CD4-positive, alpha-beta T cell (primary cell): ENCODE measurements at regions of chr1 and their contacts with region 1.

Region 1: DNA sequence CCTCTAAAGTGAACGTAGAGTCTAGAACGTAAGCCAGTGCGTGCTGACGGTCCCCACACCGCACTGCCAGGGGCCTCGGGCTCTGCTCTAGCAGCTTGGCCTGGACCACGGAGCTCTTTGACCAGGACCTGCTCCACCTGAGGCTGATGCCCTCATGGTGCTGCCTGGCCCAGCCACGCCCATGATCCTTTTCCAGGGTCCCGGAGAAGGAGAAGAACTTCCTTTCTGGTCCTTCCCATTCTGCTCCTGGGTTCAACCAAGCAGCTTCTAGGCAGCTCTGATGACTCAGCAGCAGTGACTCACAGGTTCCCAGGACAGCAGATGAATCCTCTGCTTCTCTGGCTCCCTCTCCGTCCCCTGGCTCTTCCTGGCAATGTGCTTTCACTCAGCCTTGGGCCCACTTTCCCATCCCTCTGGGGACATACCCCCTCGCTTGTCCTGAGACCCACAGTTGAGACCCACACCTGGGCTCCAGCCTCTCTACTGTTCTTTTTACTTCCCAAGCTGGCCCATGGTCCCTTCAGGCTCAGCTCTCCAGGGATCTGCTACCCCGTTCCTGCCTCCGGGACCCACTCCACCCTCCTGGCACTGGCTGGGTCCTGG is 246.3 kb upstream of the RAB4A start:
- DNase-seq: peak in 2 of 14 experiments; percentile 57 to 67
- ATAC-seq: no peak
- H3K4me3 ChIP-seq: no peak overlapping the region
- H3K4me3 Mint-ChIP-seq: no peak overlapping the region
- H3K27ac ChIP-seq: no peak overlapping the region
- H3K27ac Mint-ChIP-seq: no peak overlapping the region
- H3K4me1 ChIP-seq: peaks cover 26% of the 10 kb centered on the region
- H3K4me1 Mint-ChIP-seq: peaks cover 18% of the 10 kb centered on the region
- H3K27me3 ChIP-seq: no peaks in the 10 kb centered on the region
- H3K27me3 Mint-ChIP-seq: no peaks in the 10 kb centered on the region
- CTCF ChIP-seq: no peak

Region 2: GRCh38 chr1:229070168-229070567 is 45.5 kb after region 1 on chr1:
- CTCF ChIA-PET with region 1: no interaction called
- POLR2A ChIA-PET with region 1: no interaction called
- intact Hi-C with region 1: loop called in 1 of 2 experiments (anchors 5 kb)
- DNase-seq: peak in 2 of 14 experiments; percentile 48 to 50
- ATAC-seq: no peak
- H3K4me3 ChIP-seq: no peak overlapping the region
- H3K4me3 Mint-ChIP-seq: no peak overlapping the region
- H3K27ac ChIP-seq: no peak overlapping the region
- H3K27ac Mint-ChIP-seq: no peak overlapping the region
- H3K4me1 ChIP-seq: peaks cover 27% of the 10 kb centered on the region
- H3K4me1 Mint-ChIP-seq: peaks cover 28% of the 10 kb centered on the region
- H3K27me3 ChIP-seq: no peaks in the 10 kb centered on the region
- H3K27me3 Mint-ChIP-seq: no peaks in the 10 kb centered on the region
- CTCF ChIP-seq: no peak

Region 3: DNA sequence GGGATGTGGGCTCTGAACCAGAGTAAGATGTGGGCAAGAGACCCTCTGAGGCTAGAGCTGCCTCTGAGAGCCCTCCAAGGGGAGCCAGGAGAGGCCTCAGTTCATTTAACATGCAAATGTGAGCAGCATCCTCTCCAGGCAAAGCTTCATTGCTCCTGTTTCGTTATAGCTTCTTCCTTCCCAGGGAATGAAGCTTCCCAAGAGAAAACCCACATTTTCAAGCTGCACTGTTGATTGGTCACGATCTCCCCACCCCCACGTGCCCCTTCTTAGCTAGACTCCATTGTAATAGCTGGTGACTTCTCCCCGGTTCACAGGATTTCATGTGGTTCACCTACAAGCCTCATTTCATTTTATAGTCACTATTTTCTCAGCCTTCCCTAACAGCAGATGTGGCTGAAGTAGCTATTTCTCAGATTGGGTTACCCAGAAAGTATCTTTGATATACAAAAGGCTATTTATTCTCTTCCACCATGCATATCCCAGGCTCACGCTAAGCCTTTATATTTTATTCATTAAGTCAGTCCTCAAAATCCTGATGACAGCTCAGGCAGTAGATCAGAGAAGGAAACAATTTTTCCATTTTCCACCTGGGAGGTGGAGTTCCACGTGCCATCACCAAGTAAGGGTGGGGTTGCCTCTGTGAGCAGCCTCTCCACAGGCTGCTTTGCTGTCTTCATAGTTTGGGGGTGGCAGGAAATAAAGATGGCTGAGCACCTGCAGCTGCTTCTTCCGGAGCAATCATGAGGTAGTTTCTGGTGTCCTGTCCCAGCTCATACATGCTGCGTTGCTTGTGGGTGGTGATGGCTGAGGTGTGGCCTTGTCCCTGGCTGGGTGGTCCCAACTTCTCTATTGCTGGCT is 68.0 kb after region 1 on chr1:
- CTCF ChIA-PET with region 1: no interaction called
- POLR2A ChIA-PET with region 1: no interaction called
- intact Hi-C with region 1: no loop called
- DNase-seq: no peak
- ATAC-seq: no peak
- H3K4me3 ChIP-seq: no peak overlapping the region
- H3K4me3 Mint-ChIP-seq: no peak overlapping the region
- H3K27ac ChIP-seq: no peak overlapping the region
- H3K27ac Mint-ChIP-seq: no peak overlapping the region
- H3K4me1 ChIP-seq: peaks cover 10% of the 10 kb centered on the region
- H3K4me1 Mint-ChIP-seq: peaks cover 20% of the 10 kb centered on the region
- H3K27me3 ChIP-seq: no peaks in the 10 kb centered on the region
- H3K27me3 Mint-ChIP-seq: no peaks in the 10 kb centered on the region
- CTCF ChIP-seq: no peak